GM12878 (cell line): ENCODE measurements at regions of chr7 and their contacts with region 1.

Region 1: DNA sequence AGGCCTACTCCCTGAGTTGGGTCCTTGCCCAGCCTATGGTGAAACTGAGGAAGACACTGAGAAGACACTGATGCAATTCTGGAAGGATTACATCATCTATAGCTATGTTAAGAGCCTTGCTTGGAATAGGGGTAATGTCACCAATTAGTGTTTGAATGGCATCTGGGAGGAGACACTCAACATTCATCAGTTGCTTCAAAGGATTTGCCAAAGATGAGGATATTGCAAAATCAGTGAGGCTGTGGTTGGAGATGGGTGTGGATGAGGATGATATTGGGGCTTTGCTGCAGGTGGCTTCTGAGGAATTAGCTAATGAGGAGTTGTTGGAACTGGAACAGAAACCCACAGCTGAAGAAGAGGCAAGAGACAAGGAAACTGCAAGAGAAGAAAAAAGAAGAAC is 146.7 kb upstream of the SP4 start:
- DNase-seq: no peak
- ATAC-seq: no peak
- H3K4me3 ChIP-seq: no peak overlapping the region
- H3K27ac ChIP-seq: no peak overlapping the region
- H3K4me1 ChIP-seq: no peaks in the 10 kb centered on the region
- H3K27me3 ChIP-seq: no peaks in the 10 kb centered on the region
- CTCF ChIP-seq: no peak
- EP300 ChIP-seq: no peak
- POLR2A ChIP-seq: no peak
- RAD21 ChIP-seq: no peak

Region 2: DNA sequence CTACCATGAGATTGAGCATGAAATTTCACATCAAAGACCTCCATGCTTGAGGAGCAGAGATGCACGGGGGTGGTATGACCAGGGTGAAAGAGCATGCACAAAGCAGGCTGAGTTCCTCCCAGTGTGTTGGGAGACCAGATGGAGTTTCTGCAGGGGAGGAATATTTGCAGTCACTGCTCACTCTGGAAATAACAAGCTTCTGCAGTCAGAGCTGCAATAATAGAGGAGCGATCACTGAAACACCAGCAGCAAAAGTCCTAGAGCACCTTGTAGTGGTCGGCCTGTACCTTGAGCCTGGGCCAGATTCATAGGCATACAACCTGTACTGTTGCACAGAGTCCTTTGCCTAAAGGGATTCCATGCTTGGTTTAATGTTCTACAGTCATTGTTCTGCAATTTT is 310.0 kb before region 1 on chr7:
- CTCF ChIA-PET with region 1: no interaction called
- POLR2A ChIA-PET with region 1: no interaction called
- RAD21 ChIA-PET with region 1: no interaction called
- SMC1A ChIA-PET with region 1: no interaction called
- in situ Hi-C with region 1: no loop called
- intact Hi-C with region 1: no loop called
- DNase-seq: no peak
- ATAC-seq: no peak
- H3K4me3 ChIP-seq: no peak overlapping the region
- H3K27ac ChIP-seq: no peak overlapping the region
- H3K4me1 ChIP-seq: no peaks in the 10 kb centered on the region
- H3K27me3 ChIP-seq: no peaks in the 10 kb centered on the region
- CTCF ChIP-seq: no peak
- EP300 ChIP-seq: no peak
- POLR2A ChIP-seq: no peak
- RAD21 ChIP-seq: no peak

Region 3: DNA sequence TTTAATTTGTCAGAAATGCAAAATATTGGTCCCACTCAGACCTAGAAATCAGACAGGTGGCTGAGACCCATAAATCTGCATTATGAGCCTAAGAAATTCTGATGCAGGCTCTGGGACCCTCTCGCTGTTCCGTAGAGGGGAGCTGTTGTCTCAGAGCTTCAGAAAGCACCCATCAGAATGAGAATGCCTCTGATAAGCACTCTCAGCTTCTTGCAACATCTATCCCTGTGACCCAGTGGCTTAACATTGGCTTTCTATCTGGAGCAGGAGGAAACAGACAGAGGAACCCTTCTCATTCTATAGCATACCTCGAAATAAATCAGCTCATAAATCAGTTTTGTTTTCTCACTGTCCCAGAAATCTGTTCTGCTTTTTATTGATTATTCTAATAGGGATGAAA is 37.9 kb before region 1 on chr7:
- CTCF ChIA-PET with region 1: no interaction called
- POLR2A ChIA-PET with region 1: no interaction called
- RAD21 ChIA-PET with region 1: no interaction called
- SMC1A ChIA-PET with region 1: no interaction called
- in situ Hi-C with region 1: no loop called
- intact Hi-C with region 1: no loop called
- DNase-seq: no peak
- ATAC-seq: no peak
- H3K4me3 ChIP-seq: no peak overlapping the region
- H3K27ac ChIP-seq: no peak overlapping the region
- H3K4me1 ChIP-seq: no peaks in the 10 kb centered on the region
- H3K27me3 ChIP-seq: no peaks in the 10 kb centered on the region; a peak in 1 of 4 replicates
- CTCF ChIP-seq: no peak
- EP300 ChIP-seq: no peak
- POLR2A ChIP-seq: no peak
- RAD21 ChIP-seq: no peak

Region 4: GRCh38 chr7:21293771-21294170 is 12.6 kb after region 1 on chr7:
- CTCF ChIA-PET with region 1: interaction called, 6 read pairs
- POLR2A ChIA-PET with region 1: no interaction called
- RAD21 ChIA-PET with region 1: interaction called, 3 read pairs
- SMC1A ChIA-PET with region 1: interaction called, 13 read pairs
- in situ Hi-C with region 1: no loop called
- intact Hi-C with region 1: no loop called
- DNase-seq: no peak
- ATAC-seq: no peak
- H3K4me3 ChIP-seq: no peak overlapping the region
- H3K27ac ChIP-seq: no peak overlapping the region
- H3K4me1 ChIP-seq: no peaks in the 10 kb centered on the region
- H3K27me3 ChIP-seq: no peaks in the 10 kb centered on the region
- CTCF ChIP-seq: no peak
- EP300 ChIP-seq: no peak
- POLR2A ChIP-seq: no peak
- RAD21 ChIP-seq: peak; percentile 30